PC-9 (cell line): ENCODE measurements at regions of chr17 and their contacts with region 1.

Region 1: GRCh38 chr17:19703106-19703827 is 13.1 kb downstream of the SLC47A2 start:
- DNase-seq: no peak
- H3K4me3 ChIP-seq: no peak overlapping the region
- H3K27ac ChIP-seq: no peak overlapping the region
- H3K4me1 ChIP-seq: peaks cover 13% of the 10 kb centered on the region; the same call in 1 of the 2 replicates
- H3K27me3 ChIP-seq: no peaks in the 10 kb centered on the region
- CTCF ChIP-seq: no peak

Region 2: DNA sequence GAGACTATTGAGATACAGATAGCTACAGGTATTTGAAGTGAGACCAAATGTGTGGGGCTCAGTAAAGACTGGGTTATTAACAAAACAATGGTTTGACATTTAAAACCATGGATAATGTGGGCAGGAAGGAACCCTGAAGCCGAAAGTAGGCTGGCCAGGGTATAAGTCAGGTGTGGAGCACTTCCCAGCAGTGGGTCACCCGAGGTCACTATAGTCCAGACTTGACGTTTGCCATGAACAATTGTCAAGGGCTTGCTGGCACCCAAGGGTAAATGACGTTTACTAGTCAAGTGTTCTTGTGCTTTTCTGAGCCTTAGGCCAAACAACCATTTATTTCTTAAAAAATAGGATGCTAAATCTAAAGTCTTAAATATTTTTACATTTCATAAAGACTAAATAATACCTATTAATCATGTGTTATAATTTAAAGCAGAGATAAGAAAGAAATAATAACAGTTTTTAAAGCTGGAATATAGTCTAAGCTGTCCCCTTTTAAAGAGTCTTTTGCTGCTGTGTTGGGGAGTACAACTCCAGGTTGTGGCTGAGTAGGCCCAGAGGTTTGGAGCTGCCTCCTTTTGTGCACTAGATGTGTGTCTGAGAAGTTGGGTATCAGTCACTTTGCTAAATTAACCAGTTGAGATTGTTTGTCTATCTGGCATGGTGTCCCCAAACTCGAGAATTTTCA is 39.0 kb before region 1 on chr17:
- CTCF ChIA-PET with region 1: interaction called, 3 read pairs
- POLR2A ChIA-PET with region 1: no interaction called
- intact Hi-C with region 1: loop called (anchors 5 kb)
- DNase-seq: no peak
- H3K4me3 ChIP-seq: no peak overlapping the region
- H3K27ac ChIP-seq: no peak overlapping the region
- H3K4me1 ChIP-seq: peaks cover 22% of the 10 kb centered on the region
- H3K27me3 ChIP-seq: no peaks in the 10 kb centered on the region
- CTCF ChIP-seq: no peak

Region 3: GRCh38 chr17:19718604-19719354 is 15.5 kb after region 1 on chr17:
- CTCF ChIA-PET with region 1: interaction called, 4 read pairs
- POLR2A ChIA-PET with region 1: interaction called, 6 read pairs
- intact Hi-C with region 1: loop called (anchors 1 kb)
- DNase-seq: peak in 1 of 2 experiments; percentile 50
- H3K4me3 ChIP-seq: no peak overlapping the region
- H3K27ac ChIP-seq: peak overlapping the region; percentile 66
- H3K4me1 ChIP-seq: peaks cover 87% of the 10 kb centered on the region
- H3K27me3 ChIP-seq: no peaks in the 10 kb centered on the region
- CTCF ChIP-seq: peak; percentile 52